Aorta (tissue), 5 donors: ENCODE measurements at regions of chr12 and their contacts with region 1.

Region 1: GRCh38 chr12:12696562-12697383 is 790 bp upstream of the GPR19 start:
- DNase-seq: peak; percentile 96
- ATAC-seq: peak; percentile 95
- H3K4me3 ChIP-seq: peak overlapping the region; percentile 57 to 96
- H3K27ac ChIP-seq: peak overlapping the region; percentile 62 to 69
- H3K4me1 ChIP-seq: no peaks in the 10 kb centered on the region
- H3K27me3 ChIP-seq: no peaks in the 10 kb centered on the region

Region 2: GRCh38 chr12:12628013-12628412 is 68.8 kb before region 1 on chr12:
- intact Hi-C with region 1: no loop called
- DNase-seq: no peak
- ATAC-seq: no peak
- H3K4me3 ChIP-seq: no peak overlapping the region
- H3K27ac ChIP-seq: no peak overlapping the region
- H3K4me1 ChIP-seq: no peaks in the 10 kb centered on the region
- H3K27me3 ChIP-seq: no peaks in the 10 kb centered on the region

Region 3: DNA sequence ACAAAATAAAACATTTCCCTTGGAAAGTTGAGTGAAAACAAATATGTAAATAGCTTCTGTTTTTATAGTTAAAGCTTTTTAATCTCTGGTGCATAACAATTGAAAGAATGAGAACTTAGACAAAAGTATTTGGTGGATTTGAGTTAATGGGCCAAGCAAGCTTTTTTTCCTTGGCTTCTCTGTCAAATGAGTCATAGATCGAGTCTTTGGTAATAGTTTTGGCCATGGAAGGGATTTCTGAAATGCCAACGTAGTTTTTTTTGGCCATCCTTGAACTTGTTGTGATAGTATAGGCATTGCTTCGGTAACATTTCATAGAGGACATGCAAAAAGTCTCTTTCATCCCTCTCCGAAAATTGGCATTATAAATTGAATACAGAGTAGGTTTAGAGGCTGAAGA is 35.7 kb before region 1 on chr12:
- intact Hi-C with region 1: loop called (anchors 2 to 5 kb)
- DNase-seq: no peak
- ATAC-seq: peak; percentile 59
- H3K4me3 ChIP-seq: no peak overlapping the region
- H3K27ac ChIP-seq: no peak overlapping the region
- H3K4me1 ChIP-seq: peaks cover 0 to 6% of the 10 kb centered on the region in 2 donors
- H3K27me3 ChIP-seq: no peaks in the 10 kb centered on the region